Heart right ventricle (tissue), 16 donors: ENCODE measurements at regions of chr22 and their contacts with region 1.

Region 1: GRCh38 chr22:43826142-43827002 is 14.3 kb upstream of the EFCAB6 start:
- DNase-seq: no peak
- ATAC-seq: no peak
- H3K4me3 ChIP-seq: no peak overlapping the region
- H3K27ac ChIP-seq: no peak overlapping the region
- H3K4me1 ChIP-seq: peaks cover 11 to 28% (median 17%) of the 10 kb centered on the region in 9 donors
- H3K27me3 ChIP-seq: peaks cover 0 to 41% (median 18%) of the 10 kb centered on the region in 7 donors
- CTCF ChIP-seq: peak in 6 of 9 donors; percentile 8 to 49 (median 34)

Region 2: DNA sequence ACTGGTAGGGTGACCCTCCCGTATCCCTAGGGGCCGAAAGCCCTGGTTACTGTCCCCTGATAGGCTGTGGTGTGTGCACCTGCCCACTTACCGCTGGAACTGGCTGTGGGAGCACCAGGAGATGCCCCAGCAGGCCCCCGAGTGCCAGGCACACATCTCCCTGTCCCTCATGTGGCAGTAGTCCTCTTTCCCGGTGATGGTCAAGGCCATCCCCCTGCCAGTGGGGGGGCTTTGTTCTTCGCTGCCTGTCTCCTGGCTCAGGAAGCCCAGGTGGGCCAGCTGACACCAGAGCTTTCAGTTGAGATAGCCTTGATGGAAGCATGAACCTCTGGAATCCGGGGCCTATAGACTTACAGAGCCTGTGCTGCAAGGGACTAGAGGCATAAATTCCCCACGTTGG is 314.1 kb before region 1 on chr22:
- intact Hi-C with region 1: loop called in 1 of 10 experiments (anchors 2 kb)
- DNase-seq: no peak
- ATAC-seq: no peak
- H3K4me3 ChIP-seq: no peak overlapping the region
- H3K27ac ChIP-seq: no peak overlapping the region
- H3K4me1 ChIP-seq: no peaks in the 10 kb centered on the region
- H3K27me3 ChIP-seq: peaks cover 0 to 32% (median 10%) of the 10 kb centered on the region in 7 donors
- CTCF ChIP-seq: no peak

Region 3: GRCh38 chr22:43867839-43868652 is 41.7 kb after region 1 on chr22:
- intact Hi-C with region 1: no loop called
- DNase-seq: peak; percentile 48 to 71
- ATAC-seq: peak in 4 of 8 donors; percentile 62 to 65 (median 64)
- H3K4me3 ChIP-seq: no peak overlapping the region
- H3K27ac ChIP-seq: no peak overlapping the region
- H3K4me1 ChIP-seq: no peaks in the 10 kb centered on the region
- H3K27me3 ChIP-seq: peaks cover 0 to 47% (median 31%) of the 10 kb centered on the region in 7 donors
- CTCF ChIP-seq: no peak

Region 4: GRCh38 chr22:43884600-43885325 is 58.4 kb after region 1 on chr22:
- intact Hi-C with region 1: loop called in 1 of 10 experiments (anchors 5 kb)
- DNase-seq: peak; percentile 49 to 71
- ATAC-seq: peak in 6 of 8 donors; percentile 33 to 66 (median 52)
- H3K4me3 ChIP-seq: no peak overlapping the region
- H3K27ac ChIP-seq: no peak overlapping the region
- H3K4me1 ChIP-seq: no peaks in the 10 kb centered on the region
- H3K27me3 ChIP-seq: peaks cover 6 to 64% (median 32%) of the 10 kb centered on the region in 7 donors
- CTCF ChIP-seq: peak; percentile 52 to 85 (median 76)